Esophagus muscularis mucosa (tissue), 4 donors: ENCODE measurements at regions of chr21 and their contacts with region 1.

Region 1: DNA sequence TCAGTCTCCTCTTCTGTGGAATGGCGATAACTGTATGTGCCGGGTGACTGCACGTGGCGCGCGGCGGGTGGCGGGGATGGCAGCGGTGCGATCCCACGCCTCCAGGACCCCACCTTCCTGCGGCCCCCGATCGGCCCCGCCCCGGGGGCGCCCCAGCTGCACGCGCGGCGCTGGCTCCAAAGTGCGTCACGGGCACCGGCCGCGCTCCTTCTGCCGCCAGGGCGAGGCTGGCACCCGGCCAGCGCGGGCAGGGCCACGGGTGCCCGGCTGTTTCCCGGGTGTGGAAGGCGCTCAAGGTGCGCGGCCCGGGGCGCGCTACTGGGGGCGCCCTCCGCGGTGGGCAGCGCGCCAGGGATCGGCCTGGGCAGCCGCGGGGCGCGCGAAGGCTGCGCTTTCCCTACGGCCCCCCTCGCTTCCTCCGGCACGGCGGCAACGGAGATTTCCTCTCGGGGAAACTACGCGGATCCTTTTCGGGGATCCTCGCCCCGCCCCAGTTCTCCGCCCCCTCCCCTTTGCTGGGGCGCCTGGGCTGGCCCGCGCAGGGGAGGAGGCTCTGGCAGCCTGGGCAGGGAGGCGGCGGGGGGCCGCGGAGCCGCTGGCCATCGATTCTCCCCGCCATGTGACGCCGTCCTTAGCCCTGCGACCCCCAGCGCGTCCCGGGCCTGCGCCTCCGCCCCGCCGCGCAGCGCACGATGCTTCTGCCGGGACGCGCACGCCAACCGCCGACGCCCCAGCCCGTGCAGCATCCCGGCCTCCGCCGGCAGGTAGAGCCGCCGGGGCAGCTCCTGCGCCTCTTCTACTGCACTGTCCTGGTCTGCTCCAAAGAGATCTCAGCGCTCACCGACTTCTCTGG is at the start of gene EVA1C:
- DNase-seq: no peak
- H3K4me3 ChIP-seq: peak within 1 kb of the TSS; percentile 66 to 89 (median 82)
- H3K27ac ChIP-seq: peak within 1 kb of the TSS; percentile 98 to 100 (median 99)
- H3K4me1 ChIP-seq: peaks cover 39 to 72% (median 65%) of the 10 kb centered on the region in 4 donors
- H3K27me3 ChIP-seq: no peaks in the 10 kb centered on the region
- CTCF ChIP-seq: peak; percentile 7 to 36 (median 31)
- EP300 ChIP-seq: peak; percentile 4
- POLR2A ChIP-seq: peak; percentile 16
- total RNA-seq, gene EVA1C: 49.8 to 86.6 (median 64.6) TPM

Region 2: DNA sequence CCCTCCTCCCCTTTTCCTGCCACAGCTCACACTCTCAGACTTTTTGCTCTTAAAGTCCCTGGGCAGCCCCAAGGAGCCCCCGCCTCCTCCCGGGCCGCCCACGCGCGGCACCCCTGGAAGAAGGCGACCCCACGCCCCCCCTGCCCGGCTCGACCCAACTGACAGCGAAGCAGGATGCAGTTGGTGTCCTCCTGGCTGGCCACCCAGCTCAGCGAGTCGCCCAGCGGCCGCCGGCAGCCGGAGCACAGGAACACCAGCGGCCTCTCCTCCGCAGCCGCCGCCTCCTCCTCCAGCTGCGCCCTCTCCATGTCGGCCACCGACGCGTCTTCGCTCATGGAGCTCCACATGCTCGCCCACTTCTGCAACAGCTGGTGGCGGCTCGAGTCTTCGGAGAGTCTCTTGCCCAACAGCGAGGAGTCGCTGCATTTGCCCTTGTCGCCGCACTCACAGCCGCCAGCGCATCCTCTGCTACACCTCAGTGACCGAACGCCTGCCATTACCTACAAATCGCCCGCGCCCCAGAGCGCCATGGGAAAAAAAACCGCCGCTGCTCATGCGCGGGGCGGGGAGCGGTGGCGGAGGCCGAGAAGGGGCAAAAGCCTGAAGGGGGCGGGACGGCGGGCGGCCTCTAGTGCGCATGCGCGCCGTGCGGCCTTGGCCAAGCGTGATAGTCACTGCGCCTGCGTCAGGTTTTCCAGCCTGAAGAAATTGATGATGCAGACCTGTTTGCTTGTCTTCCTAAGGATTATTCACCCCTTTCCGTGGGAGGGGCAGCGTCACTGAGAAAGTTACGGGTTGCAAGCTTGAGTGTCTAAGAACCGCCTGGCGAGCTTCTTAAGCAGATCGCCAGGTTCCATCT is 133.6 kb before region 1 on chr21 and contains the start of gene MIS18A:
- intact Hi-C with region 1: no loop called
- DNase-seq: peak; percentile 98
- H3K4me3 ChIP-seq: peak within 1 kb of the TSS; percentile 75 to 84 (median 82)
- H3K27ac ChIP-seq: peak within 1 kb of the TSS; percentile 56 to 77 (median 68)
- H3K4me1 ChIP-seq: peaks cover 16 to 24% (median 22%) of the 10 kb centered on the region in 4 donors
- H3K27me3 ChIP-seq: no peaks in the 10 kb centered on the region
- CTCF ChIP-seq: peak in 1 of 3 experiments; percentile 53
- EP300 ChIP-seq: no peak
- POLR2A ChIP-seq: no peak
- total RNA-seq, gene MIS18A: 3.0 to 4.6 (median 3.2) TPM

Region 3: GRCh38 chr21:32448803-32449594 is 36.6 kb after region 1 on chr21:
- intact Hi-C with region 1: loop called (anchors 2 kb)
- DNase-seq: no peak
- H3K4me3 ChIP-seq: no peak overlapping the region
- H3K27ac ChIP-seq: peak overlapping the region; percentile 39 to 95 (median 90)
- H3K4me1 ChIP-seq: peaks cover 44 to 81% (median 71%) of the 10 kb centered on the region in 4 donors
- H3K27me3 ChIP-seq: no peaks in the 10 kb centered on the region
- CTCF ChIP-seq: no peak
- EP300 ChIP-seq: no peak
- POLR2A ChIP-seq: no peak

Region 4: GRCh38 chr21:32457360-32457840 is 45.0 kb after region 1 on chr21:
- intact Hi-C with region 1: loop called (anchors 2 kb)
- DNase-seq: no peak
- H3K4me3 ChIP-seq: no peak overlapping the region
- H3K27ac ChIP-seq: peak overlapping the region; percentile 81 to 95 (median 84)
- H3K4me1 ChIP-seq: peaks cover 35 to 57% (median 48%) of the 10 kb centered on the region in 4 donors
- H3K27me3 ChIP-seq: no peaks in the 10 kb centered on the region
- CTCF ChIP-seq: peak in 2 of 3 experiments; percentile 16 to 19
- EP300 ChIP-seq: no peak
- POLR2A ChIP-seq: no peak

Region 5: DNA sequence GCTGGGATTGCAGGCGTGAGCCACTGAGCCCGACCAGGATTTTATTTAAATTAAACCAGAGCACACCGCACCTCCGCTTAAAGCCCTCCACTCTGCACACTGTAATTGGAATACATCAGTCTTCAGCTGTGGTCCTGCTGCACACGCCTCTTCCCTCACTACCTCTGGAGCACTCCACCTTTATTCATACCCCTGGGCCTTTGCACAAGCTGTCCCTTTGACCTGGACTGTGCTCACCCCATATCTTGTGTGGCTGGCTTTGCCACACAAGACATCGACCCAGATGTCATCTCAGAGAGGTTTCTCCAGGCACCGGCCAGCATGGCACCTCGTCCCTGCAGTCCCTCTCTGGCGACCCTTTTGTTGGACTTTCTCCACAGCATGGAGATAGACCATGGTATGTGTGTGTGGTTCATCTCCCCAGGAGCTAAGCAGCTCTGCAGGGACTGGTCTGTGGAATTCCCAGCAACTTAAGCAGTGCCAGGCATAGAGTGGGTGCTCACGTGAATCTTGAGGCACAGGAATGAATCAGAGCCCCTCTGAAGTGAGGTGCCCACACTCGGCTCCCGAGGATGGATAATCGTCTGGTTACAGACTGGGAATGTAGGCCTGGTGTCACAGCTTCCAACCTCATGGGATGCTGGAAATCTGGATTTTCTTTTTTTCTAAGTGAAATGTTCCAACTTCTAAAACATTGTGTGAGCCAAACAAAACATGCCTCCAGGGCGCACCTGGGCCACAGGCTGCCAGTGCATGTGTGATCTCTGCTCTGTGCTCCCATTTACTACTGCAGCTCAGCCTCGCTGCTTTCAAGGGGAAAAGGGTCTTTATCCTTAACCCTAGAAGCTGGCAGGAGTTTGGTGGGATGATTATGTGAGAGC is 62.0 kb after region 1 on chr21:
- intact Hi-C with region 1: no loop called
- DNase-seq: no peak
- H3K4me3 ChIP-seq: no peak overlapping the region
- H3K27ac ChIP-seq: peak overlapping the region; percentile 34 to 54 (median 48)
- H3K4me1 ChIP-seq: peaks cover 5 to 31% (median 26%) of the 10 kb centered on the region in 4 donors
- H3K27me3 ChIP-seq: no peaks in the 10 kb centered on the region
- CTCF ChIP-seq: no peak
- EP300 ChIP-seq: no peak
- POLR2A ChIP-seq: no peak

Region 6: DNA sequence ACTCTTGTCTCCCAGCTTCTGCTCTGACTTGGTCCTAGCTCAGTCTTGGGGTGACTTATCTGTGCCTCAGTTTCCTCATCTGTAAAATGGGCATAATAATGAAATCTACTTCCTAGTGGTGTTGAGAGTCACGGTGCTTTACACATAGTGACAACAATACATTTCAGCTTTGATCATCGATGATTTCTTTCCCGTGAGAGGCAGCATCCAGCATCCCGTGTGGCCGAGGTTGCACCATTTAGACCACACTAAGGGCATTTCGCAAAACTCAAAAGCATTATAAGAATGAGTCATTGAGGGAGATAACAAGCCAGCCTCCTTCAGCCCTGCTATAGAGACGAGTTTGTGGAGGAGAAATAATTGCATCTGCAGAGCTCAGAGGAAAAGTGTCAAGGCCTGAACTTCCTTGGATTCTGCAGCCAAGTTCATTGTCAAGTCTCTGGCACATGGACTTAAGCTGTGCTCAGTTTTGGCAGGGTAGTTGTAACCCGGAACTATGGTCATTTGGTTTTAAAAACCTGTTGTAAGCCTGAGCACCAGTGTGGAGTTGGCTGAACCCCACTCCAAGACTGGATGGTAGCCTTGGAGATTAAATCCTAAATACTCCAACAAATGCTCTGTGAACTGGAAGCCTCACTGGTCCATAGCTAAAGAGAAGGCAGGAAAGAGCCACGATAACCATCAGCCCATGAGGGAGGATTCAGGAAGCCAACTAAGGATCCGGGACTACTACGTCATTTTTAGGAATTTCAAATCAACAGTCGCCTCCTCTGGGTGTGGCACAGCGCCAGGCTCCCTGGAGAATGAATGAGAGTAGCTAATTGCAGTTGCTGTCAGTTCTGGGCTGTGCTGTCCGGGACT is 108.7 kb after region 1 on chr21:
- intact Hi-C with region 1: loop called (anchors 5 kb)
- DNase-seq: peak; percentile 94
- H3K4me3 ChIP-seq: no peak overlapping the region
- H3K27ac ChIP-seq: peak overlapping the region; percentile 58 to 84 (median 63)
- H3K4me1 ChIP-seq: peaks cover 44 to 54% (median 49%) of the 10 kb centered on the region in 4 donors
- H3K27me3 ChIP-seq: no peaks in the 10 kb centered on the region
- CTCF ChIP-seq: no peak
- EP300 ChIP-seq: peak; percentile 78
- POLR2A ChIP-seq: no peak

Region 7: GRCh38 chr21:32554832-32555436 is 142.5 kb after region 1 on chr21:
- intact Hi-C with region 1: no loop called
- DNase-seq: peak; percentile 17
- H3K4me3 ChIP-seq: no peak overlapping the region
- H3K27ac ChIP-seq: no peak overlapping the region
- H3K4me1 ChIP-seq: peaks cover 0 to 4% (median 0%) of the 10 kb centered on the region in 4 donors
- H3K27me3 ChIP-seq: no peaks in the 10 kb centered on the region
- CTCF ChIP-seq: no peak
- EP300 ChIP-seq: no peak
- POLR2A ChIP-seq: no peak